CD4-positive, alpha-beta memory T cell (primary cell): ENCODE measurements at regions of chr1 and their contacts with region 1.

Region 1: GRCh38 chr1:228486596-228487335 is 416 bp upstream of the RNF187 start:
- DNase-seq: peak; percentile 83 to 90 (median 87)
- H3K4me3 ChIP-seq: peak overlapping the region; percentile 89 to 100
- H3K4me3 Mint-ChIP-seq: peak overlapping the region; percentile 88 to 98 (median 94)
- H3K27ac ChIP-seq: peak overlapping the region; percentile 99
- H3K27ac Mint-ChIP-seq: peak overlapping the region; percentile 99 to 100 (median 100)
- H3K4me1 ChIP-seq: peaks cover 32% of the 10 kb centered on the region
- H3K4me1 Mint-ChIP-seq: peaks cover 11 to 44% (median 30%) of the 10 kb centered on the region in 4 donors
- H3K27me3 ChIP-seq: no peaks in the 10 kb centered on the region
- H3K27me3 Mint-ChIP-seq: no peaks in the 10 kb centered on the region

Region 2: GRCh38 chr1:228464487-228464983 is 22.2 kb before region 1 on chr1:
- CTCF ChIA-PET with region 1: interaction called, 27 read pairs
- POLR2A ChIA-PET with region 1: interaction called, 92 read pairs
- intact Hi-C with region 1: loop called (anchors 1 kb)
- DNase-seq: peak; percentile 90 to 94 (median 91)
- H3K4me3 ChIP-seq: peak overlapping the region; percentile 51 to 85
- H3K4me3 Mint-ChIP-seq: peak overlapping the region; percentile 81 to 88 (median 86)
- H3K27ac ChIP-seq: peak overlapping the region; percentile 39
- H3K27ac Mint-ChIP-seq: peak overlapping the region; percentile 68 to 92 (median 84)
- H3K4me1 ChIP-seq: peaks cover 38% of the 10 kb centered on the region
- H3K4me1 Mint-ChIP-seq: peaks cover 31 to 57% (median 46%) of the 10 kb centered on the region in 4 donors
- H3K27me3 ChIP-seq: no peaks in the 10 kb centered on the region
- H3K27me3 Mint-ChIP-seq: peaks cover 2 to 7% of the 10 kb centered on the region in 2 donors